Panc1 (cell line): ENCODE measurements at regions of chr9 and their contacts with region 1.

Region 1: DNA sequence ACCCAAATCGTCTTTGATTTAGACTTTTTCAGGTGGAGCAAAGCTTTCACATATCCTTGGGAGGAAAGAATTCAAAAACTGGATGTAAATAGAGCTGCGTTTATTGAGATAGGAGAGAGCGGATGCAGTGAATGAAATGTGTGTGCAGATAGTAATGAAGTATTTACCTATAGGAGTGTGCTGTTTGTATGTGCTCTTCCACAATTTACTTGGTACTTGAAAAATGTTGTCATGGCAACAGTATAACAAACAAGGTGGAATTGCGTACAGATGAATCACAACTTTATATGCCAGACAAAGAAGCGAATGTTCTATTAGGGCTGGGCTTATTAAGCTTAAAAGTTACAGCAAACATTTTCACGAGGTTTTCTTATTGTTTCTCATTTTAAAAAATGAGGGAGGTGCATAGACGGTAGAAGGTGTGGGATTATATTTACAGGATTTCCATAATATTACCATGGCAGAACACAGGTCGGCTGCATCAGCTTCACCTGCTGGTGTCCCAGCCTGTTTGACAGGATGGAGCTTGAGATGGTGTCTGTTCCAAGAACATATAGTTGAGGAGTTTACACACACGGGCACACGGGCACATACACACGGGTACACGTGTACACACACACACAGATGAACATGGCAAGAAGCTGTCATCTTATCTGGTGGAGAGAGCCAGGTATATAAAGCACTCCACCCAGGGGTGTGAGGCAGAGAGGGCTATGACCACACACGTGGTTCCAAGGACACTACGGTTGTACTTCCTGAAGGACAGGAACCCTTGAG is 155.7 kb downstream of the RMI1 start:
- DNase-seq: no peak
- ATAC-seq: no peak
- H3K4me3 ChIP-seq: no peak overlapping the region
- H3K27ac ChIP-seq: no peak overlapping the region
- H3K4me1 ChIP-seq: no peaks in the 10 kb centered on the region; the same call in 1 of the 2 replicates
- H3K27me3 ChIP-seq: peaks cover 9% of the 10 kb centered on the region
- CTCF ChIP-seq: no peak

Region 2: DNA sequence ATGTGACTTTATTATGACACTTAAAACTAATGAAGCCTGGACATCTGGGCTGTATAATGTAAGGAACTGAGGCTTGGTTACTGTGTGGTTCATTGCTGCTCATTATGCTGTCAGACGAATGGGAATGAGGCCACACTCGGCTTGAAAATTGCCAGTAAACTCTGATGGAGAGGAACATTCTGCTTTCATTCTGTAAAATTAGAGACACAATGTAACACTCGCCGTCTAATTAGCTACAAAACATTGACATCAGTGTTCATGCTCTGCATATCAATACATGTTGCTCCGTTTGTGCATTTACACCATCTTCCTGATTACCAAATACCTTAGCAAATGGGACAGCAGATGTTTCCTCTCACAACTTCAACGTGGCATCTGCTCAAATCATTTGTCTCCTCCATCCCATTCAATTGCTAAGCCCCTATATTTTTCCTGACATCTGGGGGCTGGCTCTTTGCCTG is 71.2 kb after region 1 on chr9:
- CTCF ChIA-PET with region 1: no interaction called
- POLR2A ChIA-PET with region 1: interaction called, 11 read pairs
- in situ Hi-C with region 1: no loop called
- intact Hi-C with region 1: no loop called
- DNase-seq: no peak
- ATAC-seq: no peak
- H3K4me3 ChIP-seq: no peak overlapping the region
- H3K27ac ChIP-seq: no peak overlapping the region
- H3K4me1 ChIP-seq: no peaks in the 10 kb centered on the region
- H3K27me3 ChIP-seq: no peaks in the 10 kb centered on the region
- CTCF ChIP-seq: no peak